ENCODE measurements at regions of chr14 and their contacts with region 1.

Region 1: GRCh38 chr14:93184388-93185353 is at the starts of genes LYSET and MOAP1:
- DNase-seq: peak; percentile 87
- H3K4me3 Mint-ChIP-seq: peak within 1 kb of the TSS; percentile 95
- H3K27ac Mint-ChIP-seq: peak within 1 kb of the TSS; percentile 89
- H3K4me1 Mint-ChIP-seq: peaks cover 38% of the 10 kb centered on the region
- H3K27me3 Mint-ChIP-seq: no peaks in the 10 kb centered on the region
- total RNA-seq, gene LYSET: 13.1 and 14.1 TPM in 2 replicates
- total RNA-seq, gene MOAP1: 16.8 and 18.4 TPM in 2 replicates

Region 2: DNA sequence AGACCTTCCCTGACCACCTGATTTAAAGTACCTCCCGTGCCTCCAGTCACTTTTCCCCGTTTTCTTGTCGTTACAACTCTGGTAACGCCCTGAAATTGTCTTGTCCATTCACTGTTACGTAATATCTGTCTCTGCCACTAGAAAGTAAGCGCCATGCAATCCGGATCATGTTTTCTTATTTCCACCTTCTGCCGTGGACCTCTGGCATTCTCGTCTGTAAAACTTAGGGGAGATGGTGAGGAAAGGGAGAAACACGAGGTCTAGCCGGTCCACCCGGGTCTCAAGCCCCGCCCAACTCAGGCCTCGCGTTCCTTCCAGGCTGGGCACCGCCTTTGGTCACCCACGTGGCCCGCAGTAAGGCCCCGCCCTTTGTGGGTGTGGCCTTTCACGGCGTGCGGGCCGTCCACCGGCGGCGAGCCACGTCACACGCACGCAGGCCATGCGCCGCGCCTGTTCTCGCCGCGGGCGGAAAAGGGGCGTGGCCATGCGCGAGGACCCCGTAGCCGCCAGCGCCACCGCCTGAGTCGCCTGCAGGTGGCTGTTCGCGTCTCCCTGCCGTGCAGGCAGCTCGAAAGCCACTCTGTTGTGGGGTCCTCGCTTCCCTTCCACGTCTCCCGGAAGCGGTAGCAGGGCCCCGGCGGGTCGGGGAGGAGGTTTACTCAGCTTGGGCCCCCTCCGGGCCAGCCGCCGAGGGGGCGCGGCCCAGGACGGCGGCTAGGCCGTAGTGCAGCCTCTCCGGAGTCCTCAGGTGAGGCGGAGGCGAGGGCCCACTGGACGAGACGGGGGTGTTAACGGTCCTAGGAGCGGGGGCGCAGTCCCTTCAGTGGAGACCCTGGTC is 390.7 kb before region 1 on chr14 and contains the start of gene GOLGA5:
- intact Hi-C with region 1: loop called (anchors 10 kb)
- DNase-seq: peak; percentile 98
- H3K4me3 Mint-ChIP-seq: peak within 1 kb of the TSS; percentile 99
- H3K27ac Mint-ChIP-seq: peak within 1 kb of the TSS; percentile 98
- H3K4me1 Mint-ChIP-seq: peaks cover 30% of the 10 kb centered on the region
- H3K27me3 Mint-ChIP-seq: no peaks in the 10 kb centered on the region
- total RNA-seq, gene GOLGA5: 22.2 and 22.6 TPM in 2 replicates

Region 3: GRCh38 chr14:93137864-93138263 is 46.8 kb before region 1 on chr14:
- intact Hi-C with region 1: loop called (anchors 2 kb)
- DNase-seq: no peak
- H3K4me3 Mint-ChIP-seq: no peak overlapping the region
- H3K27ac Mint-ChIP-seq: no peak overlapping the region
- H3K4me1 Mint-ChIP-seq: peaks cover 5% of the 10 kb centered on the region
- H3K27me3 Mint-ChIP-seq: no peaks in the 10 kb centered on the region

Region 4: GRCh38 chr14:93206793-93207467 is 22.3 kb after region 1 on chr14 and contains the starts of genes GON7 and UBR7:
- intact Hi-C with region 1: loop called (anchors 1 kb)
- DNase-seq: peak; percentile 89
- H3K4me3 Mint-ChIP-seq: peak within 1 kb of the TSS; percentile 99
- H3K27ac Mint-ChIP-seq: peak within 1 kb of the TSS; percentile 93
- H3K4me1 Mint-ChIP-seq: peaks cover 48% of the 10 kb centered on the region
- H3K27me3 Mint-ChIP-seq: no peaks in the 10 kb centered on the region
- total RNA-seq, gene GON7: 14.8 and 15.7 TPM in 2 replicates
- total RNA-seq, gene UBR7: 30.1 and 32.4 TPM in 2 replicates

Region 5: GRCh38 chr14:93219103-93219726 is 34.5 kb after region 1 on chr14:
- intact Hi-C with region 1: loop called (anchors 1 kb)
- DNase-seq: peak; percentile 14
- H3K4me3 Mint-ChIP-seq: no peak overlapping the region
- H3K27ac Mint-ChIP-seq: no peak overlapping the region
- H3K4me1 Mint-ChIP-seq: no peaks in the 10 kb centered on the region
- H3K27me3 Mint-ChIP-seq: no peaks in the 10 kb centered on the region

Region 6: GRCh38 chr14:93317875-93318807 is 133.5 kb after region 1 on chr14:
- intact Hi-C with region 1: no loop called
- DNase-seq: no peak
- H3K4me3 Mint-ChIP-seq: no peak overlapping the region
- H3K27ac Mint-ChIP-seq: no peak overlapping the region
- H3K4me1 Mint-ChIP-seq: peaks cover 15% of the 10 kb centered on the region
- H3K27me3 Mint-ChIP-seq: no peaks in the 10 kb centered on the region

Region 7: DNA sequence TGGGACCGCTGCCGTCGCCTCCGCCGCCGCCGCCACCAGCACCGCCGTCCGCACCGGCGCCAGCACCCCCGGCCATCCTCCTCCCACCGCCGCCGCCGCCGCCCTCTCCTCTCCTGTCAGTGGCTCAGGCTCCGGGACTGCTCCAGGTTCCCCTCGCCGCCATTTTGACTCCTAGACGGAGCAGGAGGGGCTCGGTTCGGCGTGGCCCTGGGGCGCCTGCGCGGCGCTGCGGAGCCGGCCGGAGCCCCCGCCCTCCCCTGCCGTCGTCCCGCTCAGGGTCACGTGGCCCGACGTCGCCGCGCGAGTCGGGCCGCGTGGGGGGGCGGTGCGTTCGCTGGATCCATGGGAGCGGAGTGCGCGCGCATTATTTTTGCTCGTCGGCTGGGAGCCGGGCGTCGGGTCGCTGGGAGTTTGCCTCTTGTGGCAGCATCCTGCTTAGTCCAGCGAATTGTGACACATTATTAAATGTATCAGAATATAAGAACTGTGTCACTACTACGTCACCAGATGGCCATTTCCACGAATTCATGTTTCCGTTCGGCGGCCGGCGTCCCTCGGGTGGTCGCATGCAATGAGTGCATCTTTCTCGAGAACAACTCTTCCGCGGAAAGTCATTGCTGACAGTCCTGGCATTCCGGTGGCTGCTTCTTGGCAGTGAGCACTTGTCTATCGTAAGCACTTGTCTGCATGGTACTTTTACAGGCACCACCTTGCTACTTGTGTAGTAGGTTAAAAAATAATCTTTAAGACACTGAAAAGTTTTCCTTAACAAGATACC is 148.4 kb after region 1 on chr14 and contains the start of gene BTBD7:
- intact Hi-C with region 1: loop called (anchors 1 kb)
- DNase-seq: peak; percentile 94
- H3K4me3 Mint-ChIP-seq: peak within 1 kb of the TSS; percentile 92
- H3K27ac Mint-ChIP-seq: peak within 1 kb of the TSS; percentile 92
- H3K4me1 Mint-ChIP-seq: peaks cover 49% of the 10 kb centered on the region
- H3K27me3 Mint-ChIP-seq: no peaks in the 10 kb centered on the region
- total RNA-seq, gene BTBD7: 20.6 and 22.8 TPM in 2 replicates

Region 8: GRCh38 chr14:95157327-95158189 is 1972.9 kb after region 1 on chr14 and contains the start of gene DICER1:
- intact Hi-C with region 1: loop called (anchors 10 kb)
- DNase-seq: peak; percentile 92
- H3K4me3 Mint-ChIP-seq: peak within 1 kb of the TSS; percentile 94
- H3K27ac Mint-ChIP-seq: peak within 1 kb of the TSS; percentile 99
- H3K4me1 Mint-ChIP-seq: peaks cover 41% of the 10 kb centered on the region
- H3K27me3 Mint-ChIP-seq: no peaks in the 10 kb centered on the region
- total RNA-seq, gene DICER1: 76.8 and 87.2 TPM in 2 replicates